Astrocyte of the cerebellum (primary cell): ENCODE measurements at regions of chr1 and their contacts with region 1.

Region 1: GRCh38 chr1:159598196-159598595 is 10.6 kb downstream of the APCS start:
- DNase-seq: peak; percentile 91
- H3K4me3 ChIP-seq: no peak overlapping the region
- CTCF ChIP-seq: no peak

Region 2: GRCh38 chr1:159646687-159647086 is 48.5 kb after region 1 on chr1:
- in situ Hi-C with region 1: loop called (anchors 5 kb)
- DNase-seq: no peak
- H3K4me3 ChIP-seq: no peak overlapping the region
- CTCF ChIP-seq: no peak

Region 3: DNA sequence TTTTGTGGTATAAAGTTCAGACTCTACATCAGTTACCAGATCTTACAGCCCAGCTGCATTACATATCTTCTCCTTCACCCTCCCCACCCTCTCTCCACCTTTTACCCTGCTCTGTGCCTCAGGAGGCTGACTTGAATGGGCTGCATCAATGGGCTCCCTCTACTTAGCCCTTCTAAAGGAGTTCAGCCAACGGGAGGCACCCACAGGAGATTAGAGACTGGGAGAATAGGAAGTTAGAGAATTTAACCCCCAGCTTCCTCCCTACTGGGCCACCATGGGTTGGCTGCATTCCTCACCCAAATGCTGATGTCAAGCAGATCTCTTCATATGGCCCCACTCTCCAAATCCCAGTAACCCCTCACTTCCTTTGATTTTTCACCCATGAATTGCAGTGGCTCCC is 165.5 kb after region 1 on chr1:
- in situ Hi-C with region 1: no loop called
- DNase-seq: no peak
- H3K4me3 ChIP-seq: no peak overlapping the region
- CTCF ChIP-seq: no peak